Activated naive CD4-positive, alpha-beta T cell treated with anti-CD3 and anti-CD28 coated beads for 36 hours (primary cell): ENCODE measurements at regions of chr6 and their contacts with region 1.

Region 1: DNA sequence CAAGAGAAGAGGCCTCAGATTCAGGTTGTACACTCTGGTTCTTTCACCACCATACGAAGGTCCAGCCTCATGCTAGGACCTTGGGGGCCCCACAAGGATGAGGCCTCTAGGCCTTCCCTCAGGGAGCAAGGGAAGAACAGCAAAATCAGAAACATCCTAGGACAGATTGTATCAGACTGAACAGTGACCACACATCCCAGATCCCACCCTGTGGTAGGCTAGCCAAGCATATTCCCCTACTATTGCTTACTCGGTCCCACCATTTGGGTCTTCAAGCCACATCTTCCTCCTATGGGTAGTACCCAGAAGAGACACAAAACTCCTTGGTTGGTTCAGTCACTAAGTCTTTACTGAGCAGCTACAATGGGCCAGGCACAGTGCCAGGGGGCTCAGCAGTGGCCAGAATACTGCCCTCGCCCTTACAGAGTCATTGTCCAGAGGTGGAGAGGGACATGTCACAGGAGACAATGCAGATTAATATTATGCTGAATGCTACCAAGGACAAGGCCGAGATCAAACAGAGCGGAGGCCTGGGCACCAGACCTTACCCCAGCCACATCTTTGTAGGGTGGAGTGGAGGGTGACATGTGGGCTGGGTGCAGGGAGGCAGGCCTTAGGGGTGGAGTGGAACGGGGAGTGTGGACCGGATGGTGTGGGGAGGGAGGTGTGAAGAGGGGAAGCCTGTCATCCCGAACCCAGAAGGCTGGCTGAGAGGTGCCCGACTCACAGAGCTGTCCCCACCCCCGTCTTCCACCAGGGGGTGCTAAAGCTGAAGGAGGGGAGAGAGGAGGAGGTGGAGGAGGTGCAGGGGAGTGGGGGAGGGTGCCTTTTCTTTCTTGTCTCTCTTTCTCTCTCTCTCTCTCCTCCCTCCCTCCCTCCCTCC is 6.8 kb upstream of the MAPK13 start:
- DNase-seq: peak; percentile 97
- H3K4me3 Mint-ChIP-seq: no peak overlapping the region
- H3K27ac Mint-ChIP-seq: peak overlapping the region; percentile 67
- H3K4me1 Mint-ChIP-seq: peaks cover 77% of the 10 kb centered on the region
- H3K27me3 Mint-ChIP-seq: no peaks in the 10 kb centered on the region

Region 2: GRCh38 chr6:35920793-35921732 is 202.4 kb before region 1 on chr6 and contains the start of gene SRPK1:
- CTCF ChIA-PET with region 1: no interaction called
- intact Hi-C with region 1: loop called (anchors 5 kb)
- DNase-seq: peak; percentile 92
- H3K4me3 Mint-ChIP-seq: peak within 1 kb of the TSS; percentile 99
- H3K27ac Mint-ChIP-seq: peak within 1 kb of the TSS; percentile 98
- H3K4me1 Mint-ChIP-seq: peaks cover 46% of the 10 kb centered on the region
- H3K27me3 Mint-ChIP-seq: no peaks in the 10 kb centered on the region
- total RNA-seq, gene SRPK1: 126 to 127 TPM

Region 3: DNA sequence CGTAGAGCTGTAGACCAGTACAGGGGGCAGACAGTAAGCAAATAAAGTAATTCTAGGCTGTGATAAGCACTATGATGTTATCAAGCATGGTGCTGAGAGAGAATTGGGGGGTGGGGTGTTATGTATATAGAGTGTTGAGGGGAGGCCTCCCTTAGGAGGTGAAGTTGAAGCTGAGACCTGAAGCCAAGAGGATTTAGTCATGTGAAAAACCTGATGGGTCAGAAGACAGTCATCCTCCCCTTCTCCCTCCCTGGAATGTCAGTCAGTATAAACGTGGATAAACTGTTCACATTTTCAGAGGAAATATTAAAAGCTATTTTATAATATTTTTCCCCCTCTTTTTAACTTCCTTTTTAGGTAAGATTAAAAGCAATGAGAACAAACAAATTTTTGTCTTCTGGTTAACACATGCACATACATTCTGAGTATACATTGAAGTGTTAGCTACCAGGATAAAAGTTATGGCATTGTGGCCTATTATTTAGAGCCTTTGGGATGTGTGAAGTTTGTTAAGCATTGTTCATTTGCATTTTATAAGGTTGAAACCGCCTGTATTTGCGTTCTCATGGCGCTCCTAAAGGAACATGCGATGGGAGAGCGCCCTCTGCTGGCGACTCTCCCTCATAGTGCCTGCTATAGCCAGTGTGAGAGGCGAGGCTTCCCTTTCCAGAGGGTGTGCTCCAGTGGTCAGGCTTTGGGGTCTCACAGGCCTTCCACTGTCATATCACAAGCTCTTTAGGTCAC is 28.6 kb before region 1 on chr6:
- CTCF ChIA-PET with region 1: interaction called, 19 read pairs
- intact Hi-C with region 1: loop called (anchors 1 kb)
- DNase-seq: peak; percentile 90
- H3K4me3 Mint-ChIP-seq: no peak overlapping the region
- H3K27ac Mint-ChIP-seq: peak overlapping the region; percentile 42
- H3K4me1 Mint-ChIP-seq: peaks cover 29% of the 10 kb centered on the region
- H3K27me3 Mint-ChIP-seq: no peaks in the 10 kb centered on the region

Region 4: GRCh38 chr6:36196880-36197548 is 73.5 kb after region 1 on chr6:
- CTCF ChIA-PET with region 1: interaction called, 12 read pairs
- intact Hi-C with region 1: loop called (anchors 1 kb)
- DNase-seq: peak; percentile 100
- H3K4me3 Mint-ChIP-seq: peak overlapping the region; percentile 89
- H3K27ac Mint-ChIP-seq: peak overlapping the region; percentile 93
- H3K4me1 Mint-ChIP-seq: peaks cover 43% of the 10 kb centered on the region
- H3K27me3 Mint-ChIP-seq: no peaks in the 10 kb centered on the region

Region 5: GRCh38 chr6:36340618-36341454 is 217.3 kb after region 1 on chr6:
- CTCF ChIA-PET with region 1: interaction called, 7 read pairs
- intact Hi-C with region 1: loop called (anchors 5 kb)
- DNase-seq: peak; percentile 86
- H3K4me3 Mint-ChIP-seq: peak overlapping the region; percentile 36
- H3K27ac Mint-ChIP-seq: no peak overlapping the region
- H3K4me1 Mint-ChIP-seq: peaks cover 11% of the 10 kb centered on the region
- H3K27me3 Mint-ChIP-seq: peaks cover 12% of the 10 kb centered on the region

Region 6: DNA sequence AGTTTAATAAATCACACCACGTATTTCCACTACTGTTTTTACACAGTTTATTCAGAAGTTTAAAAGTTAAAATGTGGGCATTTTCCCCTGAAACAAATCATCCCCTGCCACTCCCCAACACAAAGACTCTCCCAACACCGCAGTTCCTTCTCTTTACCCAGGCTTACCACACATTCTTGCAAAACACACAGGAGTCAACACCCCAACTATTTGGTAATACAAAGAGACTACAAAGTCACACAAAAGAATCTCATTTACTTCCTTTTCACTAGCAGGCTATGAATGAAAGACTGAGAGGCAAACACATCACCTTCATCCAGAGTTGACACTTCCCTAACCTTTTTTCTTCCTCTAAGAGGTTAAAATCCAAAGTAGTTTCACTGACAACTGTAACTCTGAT is 370.4 kb after region 1 on chr6:
- CTCF ChIA-PET with region 1: no interaction called
- intact Hi-C with region 1: no loop called
- DNase-seq: no peak
- H3K4me3 Mint-ChIP-seq: no peak overlapping the region
- H3K27ac Mint-ChIP-seq: peak overlapping the region; percentile 38
- H3K4me1 Mint-ChIP-seq: peaks cover 24% of the 10 kb centered on the region
- H3K27me3 Mint-ChIP-seq: no peaks in the 10 kb centered on the region

Region 7: DNA sequence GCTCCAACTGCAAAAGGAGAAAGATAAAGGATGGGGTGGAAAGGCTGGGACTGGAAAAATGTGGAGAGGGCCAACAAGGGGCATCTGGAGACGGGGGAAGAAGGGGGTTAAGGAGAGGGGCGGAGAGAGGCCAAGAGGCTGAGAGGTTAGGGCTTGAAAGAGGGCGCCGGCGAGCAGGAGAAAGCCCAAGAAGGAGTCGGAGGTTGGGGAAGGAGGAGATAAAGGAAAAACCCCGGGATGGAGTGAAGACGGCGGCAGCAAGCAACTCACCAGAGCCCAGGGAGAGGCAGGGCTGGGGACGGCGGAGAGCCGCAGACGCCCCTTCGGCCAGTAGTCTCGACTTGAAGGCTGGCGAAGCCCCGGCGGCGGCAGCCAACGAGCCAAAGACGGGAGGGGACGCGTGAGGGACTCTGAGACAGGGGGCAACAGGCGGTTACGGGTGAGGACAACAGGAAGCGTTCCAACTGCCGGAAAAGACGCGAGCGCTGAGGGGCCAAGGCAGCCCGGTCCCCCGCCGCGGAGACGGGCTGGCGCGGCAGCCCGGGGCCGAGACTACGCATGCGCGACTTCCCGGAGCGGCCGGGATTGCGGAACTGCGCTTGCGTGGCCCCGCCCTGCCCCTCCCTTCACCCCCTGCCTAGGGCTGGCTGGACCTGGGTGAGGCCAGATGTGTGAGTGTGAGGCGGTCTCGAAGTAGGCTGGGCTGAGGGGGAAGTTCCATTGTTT is 423.6 kb after region 1 on chr6 and contains the start of gene STK38:
- CTCF ChIA-PET with region 1: no interaction called
- intact Hi-C with region 1: loop called (anchors 5 kb)
- DNase-seq: peak; percentile 95
- H3K4me3 Mint-ChIP-seq: peak within 1 kb of the TSS; percentile 97
- H3K27ac Mint-ChIP-seq: peak within 1 kb of the TSS; percentile 97
- H3K4me1 Mint-ChIP-seq: peaks cover 39% of the 10 kb centered on the region
- H3K27me3 Mint-ChIP-seq: no peaks in the 10 kb centered on the region
- total RNA-seq, gene STK38: 23.6 to 24.4 TPM

Region 8: GRCh38 chr6:36678518-36679027 is 555.1 kb after region 1 on chr6 and contains the start of gene CDKN1A:
- CTCF ChIA-PET with region 1: no interaction called
- intact Hi-C with region 1: loop called (anchors 5 kb)
- DNase-seq: peak; percentile 81
- H3K4me3 Mint-ChIP-seq: peak within 1 kb of the TSS; percentile 99
- H3K27ac Mint-ChIP-seq: peak within 1 kb of the TSS; percentile 86
- H3K4me1 Mint-ChIP-seq: peaks cover 47% of the 10 kb centered on the region
- H3K27me3 Mint-ChIP-seq: peaks cover 13% of the 10 kb centered on the region
- total RNA-seq, gene CDKN1A: 90.1 to 92.3 TPM

Region 9: DNA sequence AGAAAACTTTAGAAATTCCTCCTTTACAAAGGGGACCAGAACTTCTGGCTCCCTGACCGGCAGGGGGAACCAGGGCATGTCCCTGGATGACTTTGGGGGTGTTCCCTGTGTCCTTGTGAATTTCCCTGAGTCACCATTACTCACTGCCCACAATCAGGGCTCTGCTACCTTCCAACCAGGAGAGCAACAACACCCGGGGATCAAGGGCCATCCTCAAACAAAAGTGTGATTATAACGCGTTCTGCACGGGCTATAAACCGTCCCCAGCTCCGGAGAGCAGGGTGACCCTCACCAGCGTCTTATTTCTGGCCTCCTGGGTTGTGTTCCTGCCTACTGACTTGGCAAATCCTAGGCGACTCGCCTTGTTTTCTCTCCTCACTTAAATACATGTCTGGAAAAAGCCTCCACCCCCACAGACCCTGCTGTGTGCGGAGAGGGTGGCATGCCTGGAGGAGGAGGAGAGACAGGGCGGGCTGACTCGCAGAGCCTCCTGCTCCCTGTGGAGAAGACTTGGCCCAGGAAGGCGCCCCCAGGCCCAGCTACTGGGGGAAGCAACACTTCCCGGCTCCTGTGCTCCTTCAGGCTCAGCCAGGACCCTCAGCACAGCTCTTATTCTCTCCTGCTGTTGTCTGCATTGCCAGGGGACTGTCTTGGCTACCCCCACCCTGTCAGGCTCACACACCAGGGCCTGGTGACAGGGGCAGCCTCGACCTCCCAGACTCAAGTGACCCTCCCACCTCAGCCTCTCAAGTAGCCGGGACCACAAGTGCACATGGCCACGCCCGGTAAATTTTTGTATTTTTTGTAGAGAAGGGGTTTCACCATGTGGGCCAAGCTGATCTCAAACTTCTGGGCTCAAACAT is 936.1 kb after region 1 on chr6:
- CTCF ChIA-PET with region 1: no interaction called
- intact Hi-C with region 1: no loop called
- DNase-seq: peak; percentile 43
- H3K4me3 Mint-ChIP-seq: no peak overlapping the region
- H3K27ac Mint-ChIP-seq: no peak overlapping the region
- H3K4me1 Mint-ChIP-seq: peaks cover 3% of the 10 kb centered on the region
- H3K27me3 Mint-ChIP-seq: no peaks in the 10 kb centered on the region